ENCODE measurements at regions of chr12 and their contacts with region 1.

Region 1: DNA sequence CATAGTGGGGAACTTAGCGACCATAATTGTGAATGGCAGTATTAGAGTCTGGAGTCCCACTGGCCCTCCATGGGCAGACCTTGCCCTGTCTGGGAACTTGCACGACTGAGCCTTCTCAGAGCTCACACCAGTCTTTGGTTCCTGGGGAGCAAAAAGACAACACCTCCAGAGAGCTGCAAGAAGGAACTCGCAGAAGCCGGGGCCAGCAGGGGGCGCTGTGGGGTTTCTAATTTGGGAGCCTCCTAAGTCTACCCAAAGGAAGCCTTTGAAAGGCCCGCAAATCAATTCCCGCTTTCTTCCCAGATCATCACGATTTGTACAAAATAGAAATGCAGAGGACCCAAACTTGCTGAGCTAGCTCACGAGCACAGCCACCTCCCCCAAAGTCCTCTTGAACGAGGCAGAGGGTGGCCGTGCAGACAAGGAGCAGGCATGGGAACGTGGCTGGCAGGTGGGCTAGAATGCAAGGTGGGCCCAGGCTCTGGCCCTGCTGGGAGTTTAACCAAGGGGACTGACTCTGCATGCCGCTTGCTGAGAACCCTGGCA is 46.3 kb upstream of the FBXO21 start:
- DNase-seq: peak; percentile 63 to 87 (median 69)
- ATAC-seq: peak in 3 of 4 donors; percentile 48 to 54 (median 50)
- H3K4me3 ChIP-seq: no peak overlapping the region
- H3K27ac ChIP-seq: no peak overlapping the region
- H3K4me1 ChIP-seq: no peaks in the 10 kb centered on the region
- H3K27me3 ChIP-seq: peaks cover 0 to 31% (median 0%) of the 10 kb centered on the region in 9 donors
- CTCF ChIP-seq: peak; percentile 55 to 85 (median 72)
- POLR2A ChIP-seq: no peak

Region 2: GRCh38 chr12:117190210-117190781 is 46.2 kb before region 1 on chr12 and contains the start of gene FBXO21:
- intact Hi-C with region 1: no loop called
- DNase-seq: peak; percentile 90 to 95 (median 92)
- ATAC-seq: peak; percentile 92 to 98 (median 97)
- H3K4me3 ChIP-seq: peak within 1 kb of the TSS; percentile 51 to 98 (median 89)
- H3K27ac ChIP-seq: peak within 1 kb of the TSS; percentile 37 to 87 (median 76)
- H3K4me1 ChIP-seq: peaks cover 0 to 21% (median 11%) of the 10 kb centered on the region in 12 donors
- H3K27me3 ChIP-seq: no peaks in the 10 kb centered on the region
- CTCF ChIP-seq: no peak
- POLR2A ChIP-seq: peak; percentile 35 to 87
- total RNA-seq, gene FBXO21: 32.6 to 82.4 (median 51.3) TPM

Region 3: DNA sequence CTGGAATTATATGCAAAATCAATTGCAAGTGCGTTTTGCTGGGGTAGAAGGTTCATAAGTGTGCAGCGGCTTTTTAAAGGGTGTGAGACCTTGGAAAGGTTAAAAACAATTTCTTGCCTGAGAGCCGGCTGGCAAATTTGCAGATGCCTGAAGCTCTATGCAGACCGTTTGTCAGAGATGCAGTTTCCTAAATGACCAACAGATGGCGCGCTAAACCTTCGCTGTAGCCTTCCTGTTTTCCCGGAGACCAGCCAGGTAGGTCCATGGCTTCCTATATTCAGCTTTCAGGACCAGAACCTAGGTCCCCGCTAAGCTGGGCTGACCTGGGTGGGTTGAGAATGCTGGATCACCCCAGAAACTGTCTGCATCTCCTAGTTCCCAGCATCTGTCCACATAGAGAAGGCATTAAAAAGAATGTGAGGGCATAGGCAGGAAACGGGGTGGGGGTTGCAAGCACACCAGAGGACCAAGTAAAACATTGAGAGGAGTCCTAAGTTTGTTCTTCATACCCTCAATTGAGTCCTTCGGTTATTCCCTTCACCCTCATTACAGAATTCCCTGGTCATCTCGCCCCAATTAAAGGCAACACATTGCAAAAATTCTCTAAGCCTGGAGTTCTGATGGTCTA is 130.6 kb after region 1 on chr12:
- intact Hi-C with region 1: loop called in 6 of 10 experiments (anchors 2 to 10 kb)
- DNase-seq: peak in 4 of 5 donors; percentile 42 to 60 (median 46)
- ATAC-seq: peak in 3 of 4 donors; percentile 59 to 67 (median 62)
- H3K4me3 ChIP-seq: no peak overlapping the region
- H3K27ac ChIP-seq: no peak overlapping the region
- H3K4me1 ChIP-seq: no peaks in the 10 kb centered on the region
- H3K27me3 ChIP-seq: peaks cover 0 to 45% (median 17%) of the 10 kb centered on the region in 9 donors
- CTCF ChIP-seq: peak; percentile 72 to 87 (median 82)
- POLR2A ChIP-seq: no peak

Region 4: GRCh38 chr12:117564881-117565280 is 328.4 kb after region 1 on chr12:
- intact Hi-C with region 1: no loop called
- DNase-seq: no peak
- ATAC-seq: no peak
- H3K4me3 ChIP-seq: no peak overlapping the region
- H3K27ac ChIP-seq: no peak overlapping the region
- H3K4me1 ChIP-seq: no peaks in the 10 kb centered on the region
- H3K27me3 ChIP-seq: peaks cover 0 to 42% (median 0%) of the 10 kb centered on the region in 9 donors
- CTCF ChIP-seq: no peak
- POLR2A ChIP-seq: no peak

Region 5: GRCh38 chr12:117587631-117588287 is 351.2 kb after region 1 on chr12:
- intact Hi-C with region 1: loop called in 6 of 10 experiments (anchors 2 to 10 kb)
- DNase-seq: peak in 4 of 5 donors; percentile 19 to 53 (median 34)
- ATAC-seq: peak in 3 of 4 donors; percentile 50 to 67 (median 65)
- H3K4me3 ChIP-seq: no peak overlapping the region
- H3K27ac ChIP-seq: no peak overlapping the region
- H3K4me1 ChIP-seq: no peaks in the 10 kb centered on the region
- H3K27me3 ChIP-seq: peaks cover 0 to 43% (median 14%) of the 10 kb centered on the region in 9 donors
- CTCF ChIP-seq: peak; percentile 64 to 85 (median 80)
- POLR2A ChIP-seq: no peak

Region 6: GRCh38 chr12:117671734-117672133 is 435.2 kb after region 1 on chr12:
- intact Hi-C with region 1: loop called in 3 of 10 experiments (anchors 1 to 10 kb)
- DNase-seq: no peak
- ATAC-seq: no peak
- H3K4me3 ChIP-seq: no peak overlapping the region
- H3K27ac ChIP-seq: no peak overlapping the region
- H3K4me1 ChIP-seq: no peaks in the 10 kb centered on the region
- H3K27me3 ChIP-seq: peaks cover 0 to 32% (median 4%) of the 10 kb centered on the region in 9 donors
- CTCF ChIP-seq: peak in 10 of 12 donors; percentile 16 to 46 (median 31)
- POLR2A ChIP-seq: no peak

Region 7: GRCh38 chr12:117850048-117850447 is 613.5 kb after region 1 on chr12:
- intact Hi-C with region 1: loop called in 1 of 10 experiments (anchors 5 kb)
- DNase-seq: no peak
- ATAC-seq: no peak
- H3K4me3 ChIP-seq: no peak overlapping the region
- H3K27ac ChIP-seq: no peak overlapping the region
- H3K4me1 ChIP-seq: no peaks in the 10 kb centered on the region
- H3K27me3 ChIP-seq: peaks cover 0 to 41% (median 9%) of the 10 kb centered on the region in 9 donors
- CTCF ChIP-seq: peak; percentile 61 to 86 (median 76)
- POLR2A ChIP-seq: no peak

Measured in heart left ventricle (tissue), 16 donors.